ENCODE measurements at regions of chr11 and their contacts with region 1.

Region 1: DNA sequence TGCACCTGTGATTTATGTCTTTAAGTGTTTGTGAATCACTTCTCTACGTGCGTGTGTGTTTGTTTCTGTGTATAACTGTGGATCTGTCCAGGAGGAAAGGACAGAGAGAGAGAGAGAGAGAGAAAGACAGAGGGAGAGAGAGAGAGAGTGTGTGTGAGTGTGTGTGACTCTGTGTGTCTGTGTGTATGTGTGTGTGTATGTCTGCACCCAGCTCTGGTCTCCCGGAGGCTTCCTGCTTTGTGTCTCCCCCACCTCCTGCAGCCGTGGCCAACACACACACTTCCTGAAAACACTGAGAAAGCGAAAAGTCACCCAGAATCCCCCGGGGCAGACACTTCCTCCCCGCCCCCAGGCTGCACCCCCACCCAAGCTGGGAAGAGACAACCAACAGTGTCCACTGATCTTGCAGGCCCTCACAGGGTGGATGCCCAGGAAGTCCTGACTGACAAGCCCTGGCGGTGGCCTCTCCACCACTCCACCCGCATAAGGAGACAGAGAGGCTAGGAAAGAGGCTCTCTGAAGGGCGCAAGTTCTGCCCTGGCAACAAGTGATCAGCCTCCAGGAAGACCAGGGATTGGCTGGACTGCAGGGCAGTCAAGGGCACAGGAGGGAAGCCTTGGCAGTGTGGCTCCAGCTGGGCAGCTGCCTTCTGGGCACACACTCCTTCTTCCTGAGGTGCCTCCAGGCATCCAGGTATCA is 30.0 kb downstream of the ARAP1 start:
- DNase-seq: peak; percentile 93
- ATAC-seq: peak; percentile 92
- H3K4me3 Mint-ChIP-seq: peak overlapping the region; percentile 99
- H3K27ac Mint-ChIP-seq: peak overlapping the region; percentile 99
- H3K4me1 Mint-ChIP-seq: peaks cover 59% of the 10 kb centered on the region
- H3K27me3 Mint-ChIP-seq: no peaks in the 10 kb centered on the region

Region 2: DNA sequence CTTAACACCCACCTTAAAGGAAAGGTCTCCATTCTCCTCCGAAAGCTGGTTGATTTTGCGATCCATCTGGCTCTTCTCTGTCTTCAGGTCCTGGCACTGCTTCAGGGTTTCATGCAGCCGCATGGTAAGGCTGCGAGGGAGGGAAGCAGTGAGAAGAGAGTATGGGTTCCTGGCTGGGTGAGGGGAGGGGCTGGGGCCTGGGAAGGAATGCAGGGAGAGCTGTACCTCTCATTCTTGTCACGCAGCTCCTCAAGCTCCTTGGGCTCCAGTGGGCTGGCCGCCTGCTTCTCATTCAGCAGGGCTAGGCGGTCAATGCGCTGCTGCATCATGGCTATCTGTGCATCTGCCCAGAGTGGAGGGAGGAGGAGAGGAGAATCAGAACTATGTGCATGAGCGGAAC is 704.0 kb before region 1 on chr11:
- CTCF ChIA-PET with region 1: no interaction called
- DNase-seq: no peak
- ATAC-seq: no peak
- H3K4me3 Mint-ChIP-seq: no peak overlapping the region
- H3K27ac Mint-ChIP-seq: no peak overlapping the region
- H3K4me1 Mint-ChIP-seq: no peaks in the 10 kb centered on the region
- H3K27me3 Mint-ChIP-seq: no peaks in the 10 kb centered on the region

Region 3: GRCh38 chr11:72642884-72643511 is 79.2 kb before region 1 on chr11:
- CTCF ChIA-PET with region 1: no interaction called
- DNase-seq: peak; percentile 72
- ATAC-seq: peak; percentile 85
- H3K4me3 Mint-ChIP-seq: no peak overlapping the region
- H3K27ac Mint-ChIP-seq: no peak overlapping the region
- H3K4me1 Mint-ChIP-seq: peaks cover 2% of the 10 kb centered on the region
- H3K27me3 Mint-ChIP-seq: peaks cover 6% of the 10 kb centered on the region

Region 4: GRCh38 chr11:72736452-72737069 is 14.4 kb after region 1 on chr11:
- CTCF ChIA-PET with region 1: interaction called, 19 read pairs
- DNase-seq: peak; percentile 88
- ATAC-seq: peak; percentile 87
- H3K4me3 Mint-ChIP-seq: peak overlapping the region; percentile 10
- H3K27ac Mint-ChIP-seq: peak overlapping the region; percentile 94
- H3K4me1 Mint-ChIP-seq: peaks cover 58% of the 10 kb centered on the region
- H3K27me3 Mint-ChIP-seq: no peaks in the 10 kb centered on the region

Region 5: GRCh38 chr11:72781313-72782050 is 59.3 kb after region 1 on chr11:
- CTCF ChIA-PET with region 1: interaction called, 24 read pairs
- DNase-seq: no peak
- ATAC-seq: peak; percentile 80
- H3K4me3 Mint-ChIP-seq: peak overlapping the region; percentile 58
- H3K27ac Mint-ChIP-seq: no peak overlapping the region
- H3K4me1 Mint-ChIP-seq: peaks cover 14% of the 10 kb centered on the region
- H3K27me3 Mint-ChIP-seq: peaks cover 8% of the 10 kb centered on the region

Region 6: GRCh38 chr11:72793425-72794367 is 71.5 kb after region 1 on chr11 and contains the start of gene STARD10:
- CTCF ChIA-PET with region 1: interaction called, 121 read pairs
- DNase-seq: peak; percentile 96
- ATAC-seq: peak; percentile 97
- H3K4me3 Mint-ChIP-seq: peak within 1 kb of the TSS; percentile 87
- H3K27ac Mint-ChIP-seq: peak within 1 kb of the TSS; percentile 98
- H3K4me1 Mint-ChIP-seq: peaks cover 24% of the 10 kb centered on the region
- H3K27me3 Mint-ChIP-seq: no peaks in the 10 kb centered on the region
- total RNA-seq, gene STARD10: 8.4 to 18.4 TPM

Region 7: GRCh38 chr11:72831513-72832300 is 109.5 kb after region 1 on chr11:
- CTCF ChIA-PET with region 1: interaction called, 11 read pairs
- DNase-seq: peak; percentile 67
- ATAC-seq: peak; percentile 54
- H3K4me3 Mint-ChIP-seq: no peak overlapping the region
- H3K27ac Mint-ChIP-seq: peak overlapping the region; percentile 37
- H3K4me1 Mint-ChIP-seq: peaks cover 34% of the 10 kb centered on the region
- H3K27me3 Mint-ChIP-seq: no peaks in the 10 kb centered on the region

Measured in activated CD8-positive, alpha-beta memory T cell treated with anti-CD3 and anti-CD28 coated beads, Interleukin-2, amount 10 ng/mL, durations not matched to agents 7 days and 5 days (primary cell).